Activated CD4-positive, alpha-beta T cell treated with anti-CD3 and anti-CD28 coated beads for 36 hours (primary cell): ENCODE measurements at regions of chr17 and their contacts with region 1.

Region 1: DNA sequence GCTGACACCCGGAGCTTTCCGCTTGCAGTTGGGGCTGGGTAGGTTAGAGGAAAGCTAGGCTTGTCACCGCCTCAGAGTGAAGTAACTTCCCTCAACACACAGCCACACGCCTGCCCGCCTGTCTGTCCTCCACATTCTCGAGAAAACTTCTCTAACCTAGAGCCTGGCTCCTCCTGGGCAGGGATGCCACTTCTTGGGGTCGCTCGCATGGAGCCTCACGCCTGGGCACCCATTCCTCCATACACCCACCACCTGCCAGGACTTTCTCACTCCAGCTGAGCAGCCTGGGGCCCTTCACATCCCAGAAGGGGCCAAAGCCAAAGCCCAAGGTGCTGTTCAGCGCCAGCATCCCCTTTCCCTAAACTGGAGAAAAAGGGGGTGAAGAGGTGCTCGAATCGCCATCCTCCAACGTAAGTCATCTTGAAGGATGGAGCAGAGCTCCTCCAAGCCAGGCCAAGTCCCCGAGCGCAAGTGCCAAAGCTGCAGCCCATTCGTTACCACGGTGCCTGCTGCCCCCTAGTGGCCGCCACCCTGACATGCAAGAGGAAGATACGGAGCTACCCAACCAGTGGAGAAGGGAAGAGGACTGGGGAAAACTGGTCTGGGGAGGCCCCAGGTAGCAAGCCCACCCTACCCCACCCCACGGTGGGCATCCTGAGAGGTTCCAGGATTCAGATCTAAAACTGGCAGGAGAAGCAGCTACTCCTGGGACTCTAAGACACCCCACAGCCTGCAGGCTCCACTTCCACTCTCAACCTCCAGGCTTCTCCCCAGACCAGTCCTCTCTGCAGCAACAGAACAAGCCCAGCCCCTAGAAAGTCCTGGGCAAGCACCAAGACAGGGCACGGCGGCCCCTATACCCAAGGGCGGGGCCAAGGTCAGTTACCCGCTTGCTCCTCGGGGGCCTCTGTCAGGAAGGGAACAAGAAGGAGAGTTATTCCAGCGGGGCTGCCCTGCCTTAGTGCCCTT is 63.1 kb downstream of the MYO18A start:
- DNase-seq: peak; percentile 90
- ATAC-seq: peak; percentile 88
- H3K4me3 Mint-ChIP-seq: no peak overlapping the region
- H3K27ac Mint-ChIP-seq: no peak overlapping the region
- H3K4me1 Mint-ChIP-seq: peaks cover 5% of the 10 kb centered on the region
- H3K27me3 Mint-ChIP-seq: no peaks in the 10 kb centered on the region

Region 2: DNA sequence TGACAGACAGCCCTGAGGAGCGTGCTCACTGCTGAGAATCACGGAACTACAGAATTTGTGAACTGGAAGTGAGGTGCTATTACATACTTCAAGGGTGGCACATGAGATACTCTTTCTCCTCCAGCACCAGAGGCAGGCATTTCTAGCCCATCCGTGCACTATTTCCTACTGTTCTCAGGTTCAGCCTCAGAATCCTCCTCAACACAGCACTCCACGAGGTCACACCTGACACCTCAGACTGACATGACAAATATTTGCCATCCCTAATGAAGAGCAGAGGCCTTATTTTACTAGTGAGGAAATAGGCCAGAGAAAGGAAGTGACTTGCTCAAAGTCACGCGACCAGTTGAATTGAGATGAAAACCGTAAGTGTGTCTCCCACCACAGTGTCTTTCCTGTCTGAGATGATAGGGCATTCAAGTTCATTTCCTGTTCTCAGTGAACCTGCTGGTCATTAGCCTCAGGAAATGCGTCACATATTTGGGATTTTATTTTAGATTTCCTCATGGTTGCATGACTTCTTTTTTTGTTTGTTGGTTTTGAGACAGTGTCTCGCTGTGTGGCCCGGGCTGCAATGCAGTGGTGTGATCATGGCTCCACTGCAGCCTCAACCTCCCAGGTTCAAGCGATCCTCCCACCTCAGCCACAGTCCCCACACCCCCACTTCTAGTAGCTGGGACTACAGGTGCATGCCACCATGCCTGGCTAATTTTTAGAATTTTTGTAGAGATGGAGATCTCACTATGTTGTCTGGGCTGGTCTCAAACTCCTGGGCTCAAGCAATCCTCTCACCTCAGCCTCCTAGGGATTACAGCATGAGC is 134.7 kb before region 1 on chr17:
- CTCF ChIA-PET with region 1: interaction called, 11 read pairs
- POLR2A ChIA-PET with region 1: interaction called, 3 read pairs
- intact Hi-C with region 1: no loop called
- DNase-seq: peak; percentile 65
- ATAC-seq: peak; percentile 90
- H3K4me3 Mint-ChIP-seq: no peak overlapping the region
- H3K27ac Mint-ChIP-seq: peak overlapping the region; percentile 89
- H3K4me1 Mint-ChIP-seq: peaks cover 23% of the 10 kb centered on the region
- H3K27me3 Mint-ChIP-seq: no peaks in the 10 kb centered on the region

Region 3: GRCh38 chr17:29089601-29090044 is 27.5 kb before region 1 on chr17:
- CTCF ChIA-PET with region 1: interaction called, 20 read pairs
- POLR2A ChIA-PET with region 1: no interaction called
- intact Hi-C with region 1: no loop called
- DNase-seq: no peak
- ATAC-seq: no peak
- H3K4me3 Mint-ChIP-seq: no peak overlapping the region
- H3K27ac Mint-ChIP-seq: no peak overlapping the region
- H3K4me1 Mint-ChIP-seq: no peaks in the 10 kb centered on the region
- H3K27me3 Mint-ChIP-seq: no peaks in the 10 kb centered on the region

Region 4: GRCh38 chr17:29133146-29133713 is 16.1 kb after region 1 on chr17:
- CTCF ChIA-PET with region 1: interaction called, 129 read pairs
- POLR2A ChIA-PET with region 1: no interaction called
- intact Hi-C with region 1: no loop called
- DNase-seq: peak; percentile 41
- ATAC-seq: peak; percentile 30
- H3K4me3 Mint-ChIP-seq: no peak overlapping the region
- H3K27ac Mint-ChIP-seq: peak overlapping the region; percentile 47
- H3K4me1 Mint-ChIP-seq: peaks cover 65% of the 10 kb centered on the region
- H3K27me3 Mint-ChIP-seq: no peaks in the 10 kb centered on the region

Region 5: DNA sequence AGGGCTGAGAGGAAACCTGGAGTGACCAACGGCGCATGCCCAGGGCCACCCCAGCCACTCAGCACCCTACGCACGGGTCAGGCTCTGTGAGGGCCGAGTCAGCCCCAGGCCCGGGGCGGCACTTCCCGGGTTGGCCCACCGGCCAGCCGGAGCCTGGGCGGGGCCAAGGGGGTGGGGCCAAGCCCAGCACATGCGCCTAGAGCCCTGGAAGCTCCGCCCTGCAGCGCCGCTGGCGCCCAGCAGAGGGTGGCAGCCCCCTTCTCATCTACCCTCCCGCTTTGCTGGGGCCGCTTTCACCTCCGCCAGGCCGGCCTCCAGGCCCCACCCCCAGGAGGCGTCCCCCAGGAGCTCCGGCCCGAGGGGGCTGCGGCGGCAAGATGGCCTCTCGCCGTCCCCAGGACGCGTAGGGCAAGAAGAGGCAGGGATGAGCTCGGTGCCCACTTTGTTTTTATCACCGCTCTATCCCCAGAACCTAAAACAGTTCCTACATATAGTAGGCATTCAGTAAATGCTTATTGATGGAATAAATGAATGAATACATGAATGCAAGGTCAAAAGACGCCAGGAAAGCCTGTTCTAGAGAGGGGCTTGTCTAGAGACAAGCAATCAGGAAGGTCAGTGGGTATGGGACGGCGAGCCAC is 31.8 kb after region 1 on chr17:
- CTCF ChIA-PET with region 1: interaction called, 87 read pairs
- POLR2A ChIA-PET with region 1: no interaction called
- intact Hi-C with region 1: no loop called
- DNase-seq: peak; percentile 96
- ATAC-seq: peak; percentile 93
- H3K4me3 Mint-ChIP-seq: peak overlapping the region; percentile 56
- H3K27ac Mint-ChIP-seq: peak overlapping the region; percentile 90
- H3K4me1 Mint-ChIP-seq: peaks cover 48% of the 10 kb centered on the region
- H3K27me3 Mint-ChIP-seq: no peaks in the 10 kb centered on the region

Region 6: DNA sequence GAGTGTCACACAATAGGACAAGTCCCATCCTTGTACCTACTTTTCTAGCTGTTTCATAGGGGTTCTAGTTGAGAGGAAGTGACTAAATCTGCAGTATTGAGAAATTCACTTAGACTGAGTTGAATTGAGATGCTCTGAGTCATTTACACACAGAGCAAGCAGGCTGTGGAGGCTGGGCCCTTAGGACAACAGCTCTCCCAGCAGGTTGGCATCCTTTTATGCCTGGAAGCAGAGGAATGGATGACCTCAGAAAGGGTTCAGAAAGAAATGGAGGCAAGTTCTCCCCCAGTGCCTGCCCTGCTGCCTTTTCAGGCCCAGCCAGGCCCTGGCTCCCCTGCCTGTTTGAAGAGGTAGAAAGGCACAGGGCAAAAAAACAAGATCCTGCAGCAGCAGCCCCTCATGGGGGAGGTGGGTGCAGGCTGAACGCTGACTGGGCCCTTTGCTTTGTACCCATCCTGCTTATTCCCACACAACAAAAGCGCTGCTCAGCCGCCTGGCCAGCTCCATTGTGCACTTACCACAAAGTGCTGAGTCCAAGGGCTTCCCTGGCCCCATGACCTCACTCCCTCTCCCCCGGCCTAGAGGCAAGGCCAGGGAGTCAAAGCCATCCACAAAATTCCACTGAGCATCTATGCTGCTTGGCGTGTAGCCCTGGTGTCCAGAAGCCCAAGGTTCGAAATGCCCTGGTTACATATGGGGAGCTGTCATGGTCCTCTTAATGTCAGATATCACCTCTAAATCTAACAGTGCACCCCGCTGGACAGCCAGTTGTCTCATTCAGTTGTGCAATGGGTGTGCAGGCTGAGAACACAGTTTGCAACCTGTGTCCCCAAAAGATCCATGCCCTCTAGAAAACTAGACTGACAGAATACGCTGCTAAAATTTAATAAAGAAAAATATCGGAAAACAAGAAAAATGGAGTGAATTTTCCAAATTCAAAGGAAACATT is 124.2 kb after region 1 on chr17:
- CTCF ChIA-PET with region 1: interaction called, 19 read pairs
- POLR2A ChIA-PET with region 1: no interaction called
- intact Hi-C with region 1: no loop called
- DNase-seq: peak; percentile 63
- ATAC-seq: peak; percentile 99
- H3K4me3 Mint-ChIP-seq: no peak overlapping the region
- H3K27ac Mint-ChIP-seq: peak overlapping the region; percentile 47
- H3K4me1 Mint-ChIP-seq: peaks cover 14% of the 10 kb centered on the region
- H3K27me3 Mint-ChIP-seq: no peaks in the 10 kb centered on the region